MCF 10A (cell line): ENCODE measurements at regions of chr12 and their contacts with region 1.

Region 1: GRCh38 chr12:4857472-4858291 is 52.0 kb upstream of the KCNA1 start:
- DNase-seq: peak; percentile 64
- H3K4me3 Mint-ChIP-seq: no peak overlapping the region
- H3K27ac Mint-ChIP-seq: no peak overlapping the region
- H3K4me1 Mint-ChIP-seq: no peaks in the 10 kb centered on the region
- H3K27me3 Mint-ChIP-seq: peaks cover 47% of the 10 kb centered on the region
- CTCF ChIP-seq: peak; percentile 79

Region 2: DNA sequence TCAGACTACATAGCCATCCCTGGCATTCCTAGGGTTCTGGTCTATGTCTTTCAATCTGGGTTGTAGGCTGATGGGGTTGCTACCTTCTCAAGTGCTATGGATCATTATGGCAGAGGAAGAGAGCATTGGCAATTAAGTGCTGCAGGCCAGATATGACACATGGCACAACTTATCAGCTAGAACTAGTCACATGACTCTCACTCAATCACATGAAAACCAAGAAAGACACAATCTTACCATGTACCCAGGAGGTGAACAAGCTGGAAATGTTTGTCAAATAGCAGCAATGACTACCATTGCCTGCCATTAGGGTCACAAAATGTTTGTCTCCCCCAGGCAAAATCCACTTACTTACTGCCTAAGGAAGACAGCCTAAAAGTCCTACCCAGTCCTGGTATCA is 57.1 kb before region 1 on chr12:
- CTCF ChIA-PET with region 1: no interaction called
- POLR2A ChIA-PET with region 1: no interaction called
- intact Hi-C with region 1: no loop called
- DNase-seq: no peak
- H3K4me3 Mint-ChIP-seq: no peak overlapping the region
- H3K27ac Mint-ChIP-seq: no peak overlapping the region
- H3K4me1 Mint-ChIP-seq: no peaks in the 10 kb centered on the region
- H3K27me3 Mint-ChIP-seq: peaks cover 37% of the 10 kb centered on the region
- CTCF ChIP-seq: no peak

Region 3: DNA sequence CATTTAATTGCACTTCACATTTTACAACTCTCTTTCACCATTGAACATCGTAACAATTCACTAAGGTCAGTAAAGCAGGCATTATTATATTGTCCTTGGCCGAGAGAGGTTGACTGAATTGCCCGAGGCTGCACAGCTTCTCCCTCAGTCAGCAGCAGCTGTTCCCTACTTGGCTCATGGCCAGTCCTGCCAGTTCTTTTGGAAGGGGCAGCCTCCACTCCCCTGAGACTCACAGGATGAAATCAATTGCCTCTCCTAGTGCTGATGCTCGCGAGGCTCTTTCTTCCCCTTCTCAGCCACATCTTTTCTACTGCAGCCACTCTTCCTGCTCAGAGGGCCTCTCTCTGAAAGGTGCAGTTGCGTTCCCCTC is 27.9 kb before region 1 on chr12:
- CTCF ChIA-PET with region 1: interaction called, 14 read pairs
- POLR2A ChIA-PET with region 1: no interaction called
- intact Hi-C with region 1: no loop called
- DNase-seq: no peak
- H3K4me3 Mint-ChIP-seq: no peak overlapping the region
- H3K27ac Mint-ChIP-seq: no peak overlapping the region
- H3K4me1 Mint-ChIP-seq: no peaks in the 10 kb centered on the region
- H3K27me3 Mint-ChIP-seq: peaks cover 34% of the 10 kb centered on the region
- CTCF ChIP-seq: no peak

Region 4: DNA sequence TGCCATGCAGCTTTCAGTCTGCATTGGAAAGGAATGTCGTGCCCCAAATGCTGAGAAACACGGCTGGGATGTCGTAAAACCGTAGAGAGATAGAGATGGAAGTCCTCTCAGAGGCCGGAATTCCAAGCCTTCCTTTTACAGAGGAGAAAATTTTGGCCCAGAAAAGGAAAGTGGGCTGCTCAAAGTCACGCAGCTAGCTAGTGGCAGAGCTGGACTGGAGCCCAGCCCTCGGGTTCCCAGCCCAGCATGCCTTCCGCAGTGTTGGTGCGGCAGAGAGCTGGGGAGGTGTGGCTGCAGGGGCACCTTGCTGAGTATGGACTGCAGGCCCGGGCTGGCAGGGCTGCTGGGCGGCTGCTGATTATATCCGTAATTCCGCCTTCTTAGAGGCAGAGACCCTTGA is 102.3 kb after region 1 on chr12:
- CTCF ChIA-PET with region 1: interaction called, 10 read pairs
- POLR2A ChIA-PET with region 1: no interaction called
- intact Hi-C with region 1: no loop called
- DNase-seq: no peak
- H3K4me3 Mint-ChIP-seq: no peak overlapping the region
- H3K27ac Mint-ChIP-seq: no peak overlapping the region
- H3K4me1 Mint-ChIP-seq: no peaks in the 10 kb centered on the region
- H3K27me3 Mint-ChIP-seq: no peaks in the 10 kb centered on the region
- CTCF ChIP-seq: no peak

Region 5: GRCh38 chr12:4997939-4998338 is 140.3 kb after region 1 on chr12:
- CTCF ChIA-PET with region 1: interaction called, 90 read pairs
- POLR2A ChIA-PET with region 1: interaction called, 3 read pairs
- intact Hi-C with region 1: loop called (anchors 1 kb)
- DNase-seq: peak; percentile 60
- H3K4me3 Mint-ChIP-seq: no peak overlapping the region
- H3K27ac Mint-ChIP-seq: no peak overlapping the region
- H3K4me1 Mint-ChIP-seq: peaks cover 7% of the 10 kb centered on the region
- H3K27me3 Mint-ChIP-seq: peaks cover 14% of the 10 kb centered on the region
- CTCF ChIP-seq: no peak

Region 6: GRCh38 chr12:5013266-5013730 is 155.6 kb after region 1 on chr12:
- CTCF ChIA-PET with region 1: interaction called, 17 read pairs
- POLR2A ChIA-PET with region 1: interaction called, 3 read pairs
- intact Hi-C with region 1: no loop called
- DNase-seq: no peak
- H3K4me3 Mint-ChIP-seq: no peak overlapping the region
- H3K27ac Mint-ChIP-seq: no peak overlapping the region
- H3K4me1 Mint-ChIP-seq: no peaks in the 10 kb centered on the region
- H3K27me3 Mint-ChIP-seq: no peaks in the 10 kb centered on the region
- CTCF ChIP-seq: no peak

Region 7: DNA sequence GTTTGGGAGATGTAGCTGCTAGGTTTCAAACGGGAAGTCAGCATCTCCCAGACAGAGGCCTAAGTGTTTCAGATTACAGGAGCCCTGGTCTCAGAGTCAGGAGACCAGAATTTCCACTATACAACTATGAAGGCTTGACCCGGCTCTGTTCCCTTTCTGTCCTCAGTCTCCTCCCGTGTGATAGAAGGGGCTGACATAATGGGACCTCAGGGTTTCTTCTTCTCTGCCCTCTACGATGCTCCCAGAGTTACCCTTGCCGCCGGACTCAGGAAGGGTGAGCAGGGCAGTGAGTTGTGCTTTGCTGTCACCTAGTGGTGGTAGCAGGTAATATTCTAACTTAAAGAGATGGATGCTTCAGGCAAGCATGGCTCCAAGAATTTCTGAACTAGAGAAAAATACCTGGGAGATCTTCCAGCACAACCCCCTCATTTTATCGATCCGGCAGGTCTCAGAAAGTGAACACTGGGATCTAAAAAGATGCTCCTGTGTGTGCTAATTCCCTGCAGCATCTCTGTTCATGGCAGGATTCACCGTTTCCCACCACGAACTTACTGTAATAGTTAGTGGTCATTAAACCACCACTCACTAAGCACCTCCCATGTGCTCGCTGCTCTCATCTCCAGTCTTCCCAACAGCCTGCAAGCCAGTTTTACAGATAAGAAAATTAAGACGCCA is 1182.3 kb after region 1 on chr12:
- CTCF ChIA-PET with region 1: interaction called, 8 read pairs
- POLR2A ChIA-PET with region 1: no interaction called
- intact Hi-C with region 1: loop called (anchors 2 kb)
- DNase-seq: peak; percentile 74
- H3K4me3 Mint-ChIP-seq: no peak overlapping the region
- H3K27ac Mint-ChIP-seq: no peak overlapping the region
- H3K4me1 Mint-ChIP-seq: peaks cover 10% of the 10 kb centered on the region
- H3K27me3 Mint-ChIP-seq: no peaks in the 10 kb centered on the region
- CTCF ChIP-seq: peak; percentile 89